Ascending aorta (tissue), 2 donors: ENCODE measurements at regions of chr6 and their contacts with region 1.

Region 1: GRCh38 chr6:111483736-111484632 is 966 bp upstream of the REV3L start:
- DNase-seq: peak; percentile 92 to 99
- H3K4me3 ChIP-seq: peak overlapping the region; percentile 82 to 98
- H3K27ac ChIP-seq: peak overlapping the region; percentile 97 to 99
- H3K4me1 ChIP-seq: peaks cover 0 to 26% of the 10 kb centered on the region in 2 donors
- H3K27me3 ChIP-seq: no peaks in the 10 kb centered on the region
- CTCF ChIP-seq: no peak

Region 2: DNA sequence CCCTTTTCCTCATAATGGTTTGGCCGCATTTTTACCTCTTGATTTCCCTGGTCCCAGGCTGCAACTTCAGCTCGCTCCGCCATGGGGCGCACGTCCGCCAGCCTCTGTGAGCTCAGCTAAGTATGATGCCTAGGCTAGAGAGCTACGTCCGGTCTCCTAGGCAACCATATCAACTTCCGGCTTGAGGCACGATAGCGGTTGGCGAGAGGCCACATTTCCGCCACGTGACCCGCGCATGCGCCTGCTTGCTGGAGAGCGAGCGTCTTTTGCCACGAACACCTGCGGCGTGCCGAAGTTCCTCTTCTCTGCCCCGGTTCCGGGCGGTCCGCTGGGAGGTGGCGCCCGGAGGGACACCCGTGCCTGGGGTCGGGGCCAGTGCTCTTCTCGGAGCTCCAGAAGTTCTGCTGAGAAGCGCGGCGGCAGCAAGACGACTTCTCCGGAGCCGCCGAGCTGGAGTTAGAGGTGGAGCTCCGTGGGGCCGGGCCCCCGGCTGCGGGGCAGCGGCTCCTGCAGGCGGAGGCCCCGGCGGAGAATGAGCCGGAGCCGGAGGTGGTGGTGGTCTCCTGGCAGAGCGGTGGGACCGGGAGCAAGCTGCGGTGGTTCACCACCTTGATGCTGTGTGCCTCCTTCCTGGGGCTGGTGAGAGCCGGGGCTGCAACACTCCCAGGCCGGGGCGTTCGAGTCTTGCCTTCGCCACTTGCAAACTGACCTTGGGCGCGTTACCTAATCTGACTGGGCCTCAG is 224.7 kb before region 1 on chr6:
- intact Hi-C with region 1: loop called (anchors 1 kb)
- DNase-seq: peak; percentile 96 to 99
- H3K4me3 ChIP-seq: peak overlapping the region; percentile 63 to 90
- H3K27ac ChIP-seq: peak overlapping the region; percentile 78 to 87
- H3K4me1 ChIP-seq: peaks cover 0 to 11% of the 10 kb centered on the region in 2 donors
- H3K27me3 ChIP-seq: no peaks in the 10 kb centered on the region
- CTCF ChIP-seq: peak; percentile 92 to 96 (median 94)

Region 3: GRCh38 chr6:111301946-111302345 is 182.0 kb before region 1 on chr6:
- intact Hi-C with region 1: no loop called
- DNase-seq: no peak
- H3K4me3 ChIP-seq: no peak overlapping the region
- H3K27ac ChIP-seq: no peak overlapping the region
- H3K4me1 ChIP-seq: no peaks in the 10 kb centered on the region
- H3K27me3 ChIP-seq: no peaks in the 10 kb centered on the region
- CTCF ChIP-seq: no peak

Region 4: GRCh38 chr6:111468329-111469012 is 15.5 kb before region 1 on chr6:
- intact Hi-C with region 1: loop called (anchors 2 kb)
- DNase-seq: no peak
- H3K4me3 ChIP-seq: no peak overlapping the region
- H3K27ac ChIP-seq: peak overlapping the region; percentile 27 to 56
- H3K4me1 ChIP-seq: peaks cover 0 to 2% of the 10 kb centered on the region in 2 donors
- H3K27me3 ChIP-seq: no peaks in the 10 kb centered on the region
- CTCF ChIP-seq: no peak

Region 5: DNA sequence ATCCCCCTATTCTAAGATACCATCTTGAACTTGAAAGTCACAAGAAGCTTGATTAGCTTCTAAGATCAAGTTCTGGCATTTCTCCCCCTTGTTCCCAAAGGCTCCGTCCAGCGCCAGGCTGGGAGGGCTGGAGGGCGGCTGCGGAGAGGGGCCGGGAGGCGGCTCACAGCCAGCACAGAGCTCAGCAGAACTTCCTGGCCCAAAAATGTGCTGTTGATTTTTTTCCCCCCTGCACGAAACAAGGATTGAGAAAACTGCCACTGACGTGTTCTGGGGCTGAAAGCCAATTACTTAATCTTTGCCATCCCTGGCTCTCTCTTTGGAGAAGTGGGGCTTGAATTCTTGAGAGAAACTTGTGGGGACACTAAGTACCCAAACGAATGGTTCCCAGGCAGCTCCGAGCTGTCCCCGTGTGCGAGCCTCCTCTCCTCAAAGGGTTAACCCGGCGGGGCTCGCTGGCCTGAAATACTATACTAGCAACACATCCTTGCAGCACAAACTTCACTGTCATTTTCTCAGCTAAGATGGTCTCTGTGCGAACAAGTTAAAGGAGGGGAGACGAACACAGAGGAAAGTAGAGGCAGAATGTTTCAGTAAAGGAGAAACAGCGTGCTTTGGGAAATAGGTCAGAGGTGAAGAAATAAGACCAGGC is 121.2 kb after region 1 on chr6:
- intact Hi-C with region 1: loop called (anchors 1 kb)
- DNase-seq: peak in 1 of 2 donors; percentile 93
- H3K4me3 ChIP-seq: peak overlapping the region; percentile 64 to 65
- H3K27ac ChIP-seq: peak overlapping the region; percentile 92 to 96
- H3K4me1 ChIP-seq: peaks cover 13 to 35% of the 10 kb centered on the region in 2 donors
- H3K27me3 ChIP-seq: no peaks in the 10 kb centered on the region
- CTCF ChIP-seq: no peak

Region 6: DNA sequence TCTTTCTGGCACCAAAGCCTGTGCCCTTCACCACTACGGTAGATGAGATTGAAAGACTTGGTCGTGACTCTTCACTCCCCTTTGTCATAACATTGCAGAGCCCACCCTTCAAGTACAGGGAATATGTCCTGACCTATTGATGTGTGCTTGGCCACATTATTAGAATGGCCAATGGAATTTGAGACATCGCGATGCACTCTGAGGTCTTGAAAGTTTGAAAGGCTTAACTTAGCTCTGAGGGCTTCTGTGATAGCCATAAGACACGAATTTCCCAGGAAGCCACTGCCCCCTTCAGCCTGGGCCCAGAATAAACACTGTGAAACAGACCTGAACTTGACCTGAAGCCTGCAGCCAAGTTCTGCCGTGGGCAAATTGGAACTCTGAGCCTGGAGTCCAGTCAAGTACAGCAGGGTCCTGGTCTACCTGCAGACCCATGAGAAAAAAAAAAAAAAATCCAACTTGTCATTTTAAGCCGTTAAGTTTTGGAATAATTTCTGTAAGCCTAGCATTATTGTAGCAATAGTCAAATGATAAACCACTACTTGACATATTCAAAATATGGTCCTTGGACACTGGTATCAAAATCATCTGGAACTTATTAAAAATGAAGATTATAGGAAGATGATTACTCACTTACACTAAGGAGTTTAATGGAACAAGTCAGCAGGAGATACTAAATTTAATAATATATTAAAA is 158.6 kb after region 1 on chr6:
- intact Hi-C with region 1: loop called (anchors 5 kb)
- DNase-seq: peak in 1 of 2 donors; percentile 80
- H3K4me3 ChIP-seq: no peak overlapping the region
- H3K27ac ChIP-seq: no peak overlapping the region
- H3K4me1 ChIP-seq: no peaks in the 10 kb centered on the region
- H3K27me3 ChIP-seq: no peaks in the 10 kb centered on the region
- CTCF ChIP-seq: peak; percentile 51 to 69 (median 59)